ENCODE measurements at regions of chr22 and their contacts with region 1.

Region 1: DNA sequence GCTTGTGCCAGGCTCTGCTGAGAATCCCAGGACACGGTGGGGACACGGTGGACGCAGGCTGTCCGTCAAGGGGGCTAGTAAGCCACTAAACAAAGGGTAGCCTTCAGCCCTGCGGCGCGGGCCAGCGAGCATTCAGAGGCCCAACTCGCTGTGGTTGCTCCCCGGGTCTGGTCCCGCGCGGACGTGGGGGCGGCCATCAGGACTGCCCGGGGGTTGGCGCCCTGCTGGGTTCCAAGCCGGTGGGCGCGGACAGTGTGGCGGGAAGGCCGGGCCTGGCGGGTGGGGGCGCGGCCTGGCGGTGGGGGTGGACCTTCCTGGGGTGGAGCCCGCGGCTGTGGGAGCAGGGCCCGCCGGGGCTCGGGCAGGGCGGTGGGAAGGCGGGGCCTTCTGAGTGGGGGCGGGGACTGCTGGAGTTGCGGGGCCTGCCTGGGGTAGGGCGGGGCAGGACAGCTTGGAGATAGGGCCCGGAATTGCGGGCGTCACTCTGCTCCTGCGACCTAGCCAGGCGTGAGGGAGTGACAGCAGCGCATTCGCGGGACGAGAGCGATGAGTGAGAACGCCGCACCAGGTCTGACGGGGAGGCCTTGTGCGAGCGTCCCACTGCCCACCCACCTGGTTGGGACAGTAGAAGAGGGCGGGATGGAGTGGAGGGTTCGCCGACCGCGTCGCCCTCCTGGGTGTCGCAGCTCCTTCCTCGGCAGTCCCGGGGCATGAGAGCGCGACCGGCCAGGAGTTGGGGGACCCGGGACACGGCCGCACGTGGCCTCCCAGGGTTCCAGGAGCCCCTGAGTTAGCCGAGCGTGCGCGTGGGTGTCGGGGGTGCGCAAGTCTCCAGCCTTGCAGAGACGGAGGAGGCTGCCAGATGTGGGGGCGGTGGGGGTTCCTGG is at the start of gene SERHL2:
- DNase-seq: peak; percentile 93
- ATAC-seq: peak; percentile 97
- H3K4me3 Mint-ChIP-seq: peak within 1 kb of the TSS; percentile 76
- H3K27ac Mint-ChIP-seq: peak within 1 kb of the TSS; percentile 71
- H3K4me1 Mint-ChIP-seq: peaks cover 25% of the 10 kb centered on the region
- H3K27me3 Mint-ChIP-seq: no peaks in the 10 kb centered on the region
- total RNA-seq, gene SERHL2: 1.4 to 3.5 TPM

Region 2: DNA sequence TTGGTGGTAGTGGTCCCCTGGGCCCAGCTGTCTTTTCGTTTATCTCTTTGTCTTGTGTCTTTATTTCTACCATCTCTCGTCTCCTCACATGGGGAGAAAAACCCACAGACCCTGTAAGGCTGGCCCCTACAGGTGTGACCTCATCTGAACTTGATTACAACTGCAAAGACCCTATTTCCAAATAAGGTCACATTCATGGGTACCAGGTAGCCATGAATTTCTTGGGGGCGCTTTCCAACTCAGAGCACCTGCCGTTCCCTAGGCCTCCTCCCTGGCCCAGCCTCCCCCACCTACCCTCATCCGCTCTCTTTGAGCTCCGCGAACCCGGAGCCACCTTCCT is 20.1 kb before region 1 on chr22:
- CTCF ChIA-PET with region 1: interaction called, 13 read pairs
- DNase-seq: no peak
- ATAC-seq: peak; percentile 25
- H3K4me3 Mint-ChIP-seq: peak overlapping the region; percentile 79
- H3K27ac Mint-ChIP-seq: peak overlapping the region; percentile 94
- H3K4me1 Mint-ChIP-seq: peaks cover 27% of the 10 kb centered on the region
- H3K27me3 Mint-ChIP-seq: peaks cover 3% of the 10 kb centered on the region